Panc1 (cell line): ENCODE measurements at regions of chr3 and their contacts with region 1.

Region 1: GRCh38 chr3:138300647-138301046 is 29.0 kb downstream of the NME9 start:
- DNase-seq: no peak
- ATAC-seq: no peak
- H3K4me3 ChIP-seq: no peak overlapping the region
- H3K27ac ChIP-seq: no peak overlapping the region
- H3K4me1 ChIP-seq: no peaks in the 10 kb centered on the region
- H3K27me3 ChIP-seq: no peaks in the 10 kb centered on the region
- CTCF ChIP-seq: no peak

Region 2: DNA sequence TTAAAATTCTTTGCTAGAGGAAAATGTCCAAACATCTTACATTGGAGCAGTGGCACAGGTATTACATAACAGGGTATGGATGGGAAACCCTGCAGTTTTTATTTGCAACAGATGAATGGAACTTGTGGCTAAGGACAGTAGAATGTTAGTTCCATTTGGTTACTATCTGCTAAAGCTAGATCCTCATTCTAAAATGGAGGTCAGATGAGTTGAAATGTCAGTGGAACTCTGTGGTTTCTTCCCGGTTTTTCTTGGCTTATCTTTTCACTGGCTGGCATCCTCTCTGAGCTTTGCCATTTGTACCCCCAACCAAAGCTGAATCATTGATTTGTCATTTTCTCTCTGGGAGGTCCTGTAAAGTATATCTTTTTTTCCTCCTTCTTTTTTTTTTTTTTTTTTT is 44.6 kb before region 1 on chr3:
- CTCF ChIA-PET with region 1: no interaction called
- POLR2A ChIA-PET with region 1: interaction called, 15 read pairs
- in situ Hi-C with region 1: no loop called
- intact Hi-C with region 1: no loop called
- DNase-seq: no peak
- ATAC-seq: no peak
- H3K4me3 ChIP-seq: no peak overlapping the region
- H3K27ac ChIP-seq: no peak overlapping the region
- H3K4me1 ChIP-seq: no peaks in the 10 kb centered on the region
- H3K27me3 ChIP-seq: no peaks in the 10 kb centered on the region
- CTCF ChIP-seq: no peak